HCT116 (cell line): ENCODE measurements at regions of chr16 and their contacts with region 1.

Region 1: DNA sequence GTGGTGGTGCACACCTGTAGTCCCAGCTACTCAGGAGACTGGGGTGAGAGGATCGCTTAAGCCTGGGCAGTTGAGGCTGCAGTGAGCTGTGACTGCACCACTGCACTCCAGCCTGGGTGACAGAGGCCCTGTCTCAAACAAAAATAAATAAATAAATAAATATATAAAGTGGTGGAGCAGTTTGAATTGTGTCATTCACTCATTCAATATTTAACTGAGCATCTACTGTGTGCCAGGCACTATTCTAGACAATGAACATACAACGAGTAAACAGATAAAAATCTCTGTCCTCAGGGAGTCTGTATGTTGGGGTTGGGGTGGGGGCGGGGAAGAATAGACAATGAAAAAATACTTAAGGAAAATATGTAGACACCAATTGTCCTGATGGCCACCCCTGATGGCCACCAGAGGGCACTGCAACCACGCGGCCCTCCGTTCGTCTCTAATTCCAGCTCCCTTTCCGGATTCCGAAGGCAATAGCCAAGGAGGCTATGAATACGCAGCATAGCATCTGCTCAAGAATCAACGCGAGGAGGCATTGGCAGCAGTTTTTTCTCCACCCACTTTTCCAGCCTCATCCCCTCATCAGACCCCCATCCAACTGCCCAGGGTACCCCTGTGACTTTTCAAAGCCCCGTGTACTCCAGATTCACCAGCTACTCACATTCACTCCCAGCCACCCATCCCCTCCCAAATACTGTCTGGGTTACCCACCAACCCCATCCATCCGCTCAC is 21.4 kb downstream of the QPRT start:
- DNase-seq: peak; percentile 84
- ATAC-seq: peak; percentile 97
- H3K4me3 ChIP-seq: peak overlapping the region in 1 of 2 experiments; percentile 16; a peak in 1 of 4 replicates
- H3K27ac ChIP-seq: no peak overlapping the region
- H3K4me1 ChIP-seq: peaks cover 2 to 17% of the 10 kb centered on the region in 2 experiments; a peak in 3 of 4 replicates
- H3K27me3 ChIP-seq: no peaks in the 10 kb centered on the region
- CTCF ChIP-seq: peak; percentile 85 to 90 (median 86)
- POLR2A ChIP-seq: no peak
- RAD21 ChIP-seq: peak; percentile 96

Region 2: DNA sequence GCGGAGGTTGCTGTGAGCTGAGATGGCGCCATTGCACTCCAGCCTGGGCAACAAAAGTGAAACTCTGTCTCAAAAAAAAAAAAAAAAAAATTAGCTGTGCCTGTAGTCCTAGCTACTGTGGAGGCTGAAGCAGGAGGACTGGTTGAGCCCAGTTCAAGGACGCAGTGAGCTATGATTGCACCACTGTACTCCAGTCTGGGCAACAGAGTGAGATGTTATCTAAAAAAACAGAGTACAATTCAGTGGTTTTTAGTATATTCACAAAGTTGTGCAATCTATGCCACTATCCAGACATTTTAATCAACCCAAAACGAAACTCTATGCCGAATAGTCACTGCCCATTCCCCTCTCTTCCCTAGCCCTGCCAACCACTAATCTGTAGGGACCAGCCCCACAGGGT is 20.3 kb after region 1 on chr16:
- CTCF ChIA-PET with region 1: interaction called, 13 read pairs
- POLR2A ChIA-PET with region 1: no interaction called
- RAD21 ChIA-PET with region 1: no interaction called
- intact Hi-C with region 1: no loop called
- DNase-seq: no peak
- ATAC-seq: no peak
- H3K4me3 ChIP-seq: no peak overlapping the region
- H3K27ac ChIP-seq: no peak overlapping the region
- H3K4me1 ChIP-seq: peaks cover 0 to 6% of the 10 kb centered on the region in 2 experiments; a peak in 1 of 4 replicates
- H3K27me3 ChIP-seq: no peaks in the 10 kb centered on the region
- CTCF ChIP-seq: no peak
- POLR2A ChIP-seq: no peak
- RAD21 ChIP-seq: no peak

Region 3: DNA sequence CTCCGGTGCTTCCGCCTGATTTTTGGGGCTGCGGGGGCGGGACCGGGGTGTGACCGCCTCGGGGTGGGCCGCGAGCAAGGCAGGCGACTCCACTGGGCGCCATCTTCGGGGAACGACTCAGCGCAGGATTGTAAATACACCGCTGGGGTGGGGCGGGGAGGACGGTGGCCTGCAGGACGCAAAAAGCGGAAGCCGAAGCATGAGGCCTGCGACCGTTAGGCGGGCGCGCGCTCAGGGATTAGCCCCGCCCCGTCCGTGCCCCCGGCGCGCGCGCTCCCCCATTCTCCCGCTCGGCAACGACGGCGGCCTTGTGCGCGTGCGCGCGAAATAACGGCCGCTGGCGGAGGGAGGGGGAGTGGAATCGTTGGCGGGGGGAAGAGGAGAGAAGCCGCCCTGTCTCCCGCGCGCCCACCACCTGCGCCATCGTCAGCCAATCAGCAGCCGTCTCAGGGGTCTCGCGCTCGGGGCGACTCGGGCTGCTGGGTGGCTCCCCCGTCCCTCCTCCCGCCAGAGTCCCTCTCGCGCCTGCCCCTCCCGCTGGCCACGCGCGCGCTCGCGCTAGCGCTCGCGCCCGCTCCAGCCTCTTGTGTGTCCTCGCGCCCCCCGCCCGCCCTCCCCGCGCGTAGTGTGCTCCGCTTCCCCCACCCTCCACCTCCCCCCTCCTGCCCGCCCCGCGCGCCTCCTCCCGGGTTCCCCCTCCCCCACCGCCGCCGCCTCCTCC is 105.1 kb after region 1 on chr16:
- CTCF ChIA-PET with region 1: interaction called, 17 read pairs
- POLR2A ChIA-PET with region 1: interaction called, 3 read pairs
- RAD21 ChIA-PET with region 1: interaction called in 1 of 2 experiments, 4 read pairs
- intact Hi-C with region 1: no loop called
- DNase-seq: peak; percentile 93
- ATAC-seq: peak; percentile 56
- H3K4me3 ChIP-seq: peak overlapping the region; percentile 67 to 70
- H3K27ac ChIP-seq: peak overlapping the region; percentile 85
- H3K4me1 ChIP-seq: peaks cover 27 to 55% of the 10 kb centered on the region in 2 experiments
- H3K27me3 ChIP-seq: no peaks in the 10 kb centered on the region
- CTCF ChIP-seq: no peak
- POLR2A ChIP-seq: peak; percentile 75
- RAD21 ChIP-seq: no peak

Region 4: DNA sequence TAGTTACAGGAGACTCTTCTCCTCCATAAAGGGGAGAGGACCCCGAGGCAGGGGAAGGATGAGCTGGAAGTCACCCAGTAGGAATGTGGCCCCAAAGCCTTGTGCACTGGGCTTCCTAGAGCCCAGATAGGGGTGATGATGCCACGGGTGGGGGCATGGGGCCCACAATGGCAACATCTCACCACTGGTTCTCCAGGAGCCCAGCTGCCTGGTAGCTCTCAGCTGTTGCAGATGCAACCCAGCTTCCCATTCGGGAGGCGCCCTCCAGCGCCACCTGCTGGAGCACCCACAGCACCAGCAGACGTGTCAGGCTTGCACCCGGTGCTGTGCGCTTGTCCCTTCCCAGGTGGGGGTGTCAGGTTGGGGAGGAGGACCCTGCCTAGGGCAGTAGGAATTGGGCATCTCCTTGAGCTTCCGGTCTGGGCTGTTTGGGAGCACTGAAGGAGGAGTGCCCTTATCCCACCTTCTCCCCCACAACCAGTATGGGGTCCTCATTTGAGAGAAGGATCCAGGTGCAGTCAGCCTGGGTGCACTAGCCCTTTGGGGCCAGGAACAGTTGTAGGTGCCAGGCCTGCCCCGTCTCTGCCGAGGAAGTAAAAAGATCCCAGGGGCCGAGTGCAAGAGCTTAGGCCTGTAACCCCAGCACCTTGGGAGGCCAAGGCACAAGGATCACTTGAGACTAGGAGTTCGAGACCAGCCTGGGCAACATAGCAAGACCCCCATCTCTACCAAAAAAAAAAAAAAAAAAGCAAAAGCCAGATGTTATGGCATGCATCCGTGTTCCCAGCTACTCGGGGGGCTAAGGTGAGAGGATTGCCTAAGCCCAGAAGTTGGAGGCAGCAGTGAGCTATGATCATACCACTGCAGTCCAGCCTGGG is 148.2 kb after region 1 on chr16:
- CTCF ChIA-PET with region 1: interaction called, 32 read pairs
- POLR2A ChIA-PET with region 1: no interaction called
- RAD21 ChIA-PET with region 1: interaction called, 4 to 6 read pairs
- intact Hi-C with region 1: loop called (anchors 1 kb)
- DNase-seq: peak; percentile 44
- ATAC-seq: peak; percentile 93
- H3K4me3 ChIP-seq: no peak overlapping the region
- H3K27ac ChIP-seq: no peak overlapping the region
- H3K4me1 ChIP-seq: peaks cover 0 to 5% of the 10 kb centered on the region in 2 experiments; a peak in 3 of 4 replicates
- H3K27me3 ChIP-seq: no peaks in the 10 kb centered on the region
- CTCF ChIP-seq: peak; percentile 84 to 97 (median 95)
- POLR2A ChIP-seq: no peak
- RAD21 ChIP-seq: peak; percentile 93

Region 5: DNA sequence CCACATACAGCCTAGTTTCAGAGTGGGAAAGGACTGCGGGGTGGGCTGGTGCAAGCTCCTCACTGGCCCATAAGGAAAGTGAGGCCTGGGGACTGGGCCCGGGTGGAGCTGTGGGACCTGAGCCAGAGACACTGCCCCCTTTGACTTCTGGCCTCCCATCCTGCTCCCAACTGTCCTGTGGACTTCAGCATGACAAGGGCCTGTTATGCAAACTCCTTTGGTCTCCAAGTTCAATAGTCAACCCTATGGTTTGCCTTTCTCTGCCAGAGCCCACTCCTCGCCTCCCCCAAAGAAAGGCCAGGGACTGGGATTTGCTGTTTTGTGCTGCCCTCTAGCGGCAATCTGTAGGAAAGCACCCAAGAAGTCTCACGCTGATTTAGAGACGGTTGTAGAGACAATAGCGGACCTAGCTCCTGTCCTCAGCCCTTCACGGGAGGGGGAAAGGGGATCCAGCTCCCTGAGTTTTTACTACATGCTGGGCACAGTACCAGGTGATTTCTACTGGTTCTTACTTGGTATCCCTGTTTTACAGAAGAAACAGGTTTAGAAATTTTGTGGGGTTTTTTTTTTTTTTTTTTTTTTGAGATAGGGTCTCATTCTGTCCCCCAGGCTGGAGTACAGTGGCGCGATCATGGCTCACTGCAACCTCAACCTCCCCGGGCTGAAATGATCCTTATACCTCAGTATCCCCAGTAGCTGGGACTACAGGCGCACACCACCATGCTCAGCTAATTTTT is 331.8 kb after region 1 on chr16:
- CTCF ChIA-PET with region 1: interaction called, 34 read pairs
- POLR2A ChIA-PET with region 1: no interaction called
- RAD21 ChIA-PET with region 1: interaction called, 8 to 11 read pairs
- intact Hi-C with region 1: loop called (anchors 1 kb)
- DNase-seq: peak; percentile 58
- ATAC-seq: peak; percentile 79
- H3K4me3 ChIP-seq: no peak overlapping the region
- H3K27ac ChIP-seq: no peak overlapping the region
- H3K4me1 ChIP-seq: peaks cover 0 to 5% of the 10 kb centered on the region in 2 experiments; a peak in 2 of 4 replicates
- H3K27me3 ChIP-seq: no peaks in the 10 kb centered on the region
- CTCF ChIP-seq: peak; percentile 86 to 97 (median 87)
- POLR2A ChIP-seq: no peak
- RAD21 ChIP-seq: peak; percentile 95